MCF 10A (cell line): ENCODE measurements at regions of chr12 and their contacts with region 1.

Region 1: GRCh38 chr12:108838194-108839017 is 19.0 kb downstream of the SSH1 start:
- DNase-seq: peak; percentile 98
- H3K4me3 Mint-ChIP-seq: peak overlapping the region; percentile 65
- H3K27ac Mint-ChIP-seq: peak overlapping the region; percentile 87
- H3K4me1 Mint-ChIP-seq: peaks cover 40% of the 10 kb centered on the region
- H3K27me3 Mint-ChIP-seq: no peaks in the 10 kb centered on the region
- CTCF ChIP-seq: no peak

Region 2: GRCh38 chr12:108816652-108817335 is 21.6 kb before region 1 on chr12:
- CTCF ChIA-PET with region 1: interaction called, 8 read pairs
- POLR2A ChIA-PET with region 1: interaction called, 28 read pairs
- intact Hi-C with region 1: no loop called
- DNase-seq: peak; percentile 33
- H3K4me3 Mint-ChIP-seq: no peak overlapping the region
- H3K27ac Mint-ChIP-seq: peak overlapping the region; percentile 12
- H3K4me1 Mint-ChIP-seq: peaks cover 31% of the 10 kb centered on the region
- H3K27me3 Mint-ChIP-seq: no peaks in the 10 kb centered on the region
- CTCF ChIP-seq: no peak

Region 3: DNA sequence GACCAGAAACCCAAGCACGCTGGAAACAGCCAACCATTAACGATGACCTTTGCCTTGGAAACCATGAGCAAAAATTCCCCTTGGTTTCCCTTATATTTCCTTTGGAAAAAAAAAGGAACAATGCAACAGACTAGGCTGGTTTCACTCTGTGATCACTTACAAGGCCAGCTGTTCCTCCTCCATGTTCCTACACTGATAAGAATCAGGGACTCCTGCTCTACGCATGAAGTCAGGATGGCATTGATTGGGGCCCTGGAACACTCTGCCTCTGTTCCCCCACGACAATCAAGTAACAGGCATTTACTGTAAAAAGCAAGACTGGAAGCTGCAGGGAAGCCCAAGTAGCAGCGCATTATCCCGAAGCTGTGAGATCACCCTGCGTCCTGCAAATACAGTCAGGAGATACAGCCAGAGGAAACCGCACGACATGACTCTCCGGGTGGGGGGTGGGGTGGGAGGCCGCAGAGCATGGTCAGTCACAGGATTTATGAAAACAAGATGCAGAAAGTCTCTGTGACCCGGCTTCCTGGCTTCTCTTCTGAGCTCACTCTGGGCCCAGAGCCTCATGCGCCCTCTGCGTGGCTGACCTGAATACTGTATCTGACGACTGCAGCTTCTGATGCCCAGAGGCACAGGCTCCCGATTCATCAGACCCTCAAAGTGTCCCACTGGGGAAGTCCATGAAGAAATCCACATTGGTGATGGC is 12.2 kb before region 1 on chr12:
- CTCF ChIA-PET with region 1: interaction called, 7 read pairs
- POLR2A ChIA-PET with region 1: interaction called, 18 read pairs
- intact Hi-C with region 1: no loop called
- DNase-seq: no peak
- H3K4me3 Mint-ChIP-seq: no peak overlapping the region
- H3K27ac Mint-ChIP-seq: no peak overlapping the region
- H3K4me1 Mint-ChIP-seq: peaks cover 21% of the 10 kb centered on the region
- H3K27me3 Mint-ChIP-seq: no peaks in the 10 kb centered on the region
- CTCF ChIP-seq: no peak

Region 4: GRCh38 chr12:108850854-108851573 is 12.6 kb after region 1 on chr12:
- CTCF ChIA-PET with region 1: interaction called, 8 read pairs
- POLR2A ChIA-PET with region 1: interaction called, 13 read pairs
- intact Hi-C with region 1: loop called (anchors 2 kb)
- DNase-seq: no peak
- H3K4me3 Mint-ChIP-seq: no peak overlapping the region
- H3K27ac Mint-ChIP-seq: peak overlapping the region; percentile 16
- H3K4me1 Mint-ChIP-seq: peaks cover 19% of the 10 kb centered on the region
- H3K27me3 Mint-ChIP-seq: no peaks in the 10 kb centered on the region
- CTCF ChIP-seq: no peak